Aorta (tissue), 5 donors: ENCODE measurements at regions of chr6 and their contacts with region 1.

Region 1: GRCh38 chr6:53725791-53726431 is 60.4 kb upstream of the KLHL31 start:
- DNase-seq: peak; percentile 80 to 92
- ATAC-seq: peak; percentile 94
- H3K4me3 ChIP-seq: no peak overlapping the region
- H3K27ac ChIP-seq: no peak overlapping the region
- H3K4me1 ChIP-seq: no peaks in the 10 kb centered on the region
- H3K27me3 ChIP-seq: no peaks in the 10 kb centered on the region

Region 2: GRCh38 chr6:53492860-53493634 is 232.9 kb before region 1 on chr6:
- intact Hi-C with region 1: loop called (anchors 2 to 10 kb)
- DNase-seq: no peak
- ATAC-seq: peak; percentile 83
- H3K4me3 ChIP-seq: peak overlapping the region; percentile 41 to 42
- H3K27ac ChIP-seq: peak overlapping the region in 1 of 2 donors; percentile 57
- H3K4me1 ChIP-seq: no peaks in the 10 kb centered on the region
- H3K27me3 ChIP-seq: no peaks in the 10 kb centered on the region

Region 3: DNA sequence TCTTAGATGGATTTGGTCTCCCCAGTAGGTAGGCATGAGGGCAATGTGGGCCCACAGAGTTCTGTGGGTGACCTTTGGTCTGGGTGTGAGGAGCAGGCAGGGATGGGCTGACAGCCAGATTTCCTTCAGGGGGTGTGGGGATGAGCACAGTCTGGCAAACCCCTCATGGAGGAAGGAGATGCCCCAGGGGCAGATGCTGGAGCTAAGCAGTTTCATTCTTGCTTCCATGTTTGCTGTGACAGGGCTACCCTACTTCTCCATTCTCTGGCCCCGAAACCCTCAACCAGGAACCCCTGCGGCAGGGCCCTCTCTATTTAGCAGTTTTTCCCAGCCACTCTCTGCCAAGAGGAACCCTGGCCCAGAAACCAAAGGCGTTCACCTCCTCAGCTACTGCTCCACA is 221.4 kb before region 1 on chr6:
- intact Hi-C with region 1: loop called (anchors 5 to 10 kb)
- DNase-seq: no peak
- ATAC-seq: no peak
- H3K4me3 ChIP-seq: no peak overlapping the region
- H3K27ac ChIP-seq: no peak overlapping the region
- H3K4me1 ChIP-seq: no peaks in the 10 kb centered on the region
- H3K27me3 ChIP-seq: no peaks in the 10 kb centered on the region

Region 4: GRCh38 chr6:53956068-53956711 is 230.3 kb after region 1 on chr6:
- intact Hi-C with region 1: loop called (anchors 2 to 5 kb)
- DNase-seq: peak; percentile 72 to 88
- ATAC-seq: peak; percentile 86
- H3K4me3 ChIP-seq: no peak overlapping the region
- H3K27ac ChIP-seq: no peak overlapping the region
- H3K4me1 ChIP-seq: no peaks in the 10 kb centered on the region
- H3K27me3 ChIP-seq: no peaks in the 10 kb centered on the region